Panc1 (cell line): ENCODE measurements at regions of chr2 and their contacts with region 1.

Region 1: GRCh38 chr2:182933629-182934028 is 67.2 kb upstream of the FRZB start:
- DNase-seq: no peak
- ATAC-seq: no peak
- H3K4me3 ChIP-seq: no peak overlapping the region
- H3K27ac ChIP-seq: no peak overlapping the region
- H3K4me1 ChIP-seq: no peaks in the 10 kb centered on the region
- H3K27me3 ChIP-seq: no peaks in the 10 kb centered on the region
- CTCF ChIP-seq: no peak

Region 2: GRCh38 chr2:182740701-182741100 is 192.9 kb before region 1 on chr2:
- CTCF ChIA-PET with region 1: interaction called, 15 read pairs
- POLR2A ChIA-PET with region 1: no interaction called
- in situ Hi-C with region 1: no loop called
- intact Hi-C with region 1: no loop called
- DNase-seq: no peak
- ATAC-seq: no peak
- H3K4me3 ChIP-seq: no peak overlapping the region
- H3K27ac ChIP-seq: no peak overlapping the region
- H3K4me1 ChIP-seq: no peaks in the 10 kb centered on the region
- H3K27me3 ChIP-seq: no peaks in the 10 kb centered on the region
- CTCF ChIP-seq: no peak